Activated CD4-positive, alpha-beta memory T cell treated with anti-CD3 and anti-CD28 coated beads, Interleukin-2, amount 10 ng/mL, durations not matched to agents 7 days and 5 days (primary cell): ENCODE measurements at regions of chr19 and their contacts with region 1.

Region 1: GRCh38 chr19:49676690-49677231 is 310 bp upstream of the PRMT1 start:
- DNase-seq: peak; percentile 99
- H3K4me3 Mint-ChIP-seq: peak overlapping the region; percentile 90
- H3K27ac Mint-ChIP-seq: peak overlapping the region; percentile 89
- H3K4me1 Mint-ChIP-seq: peaks cover 43% of the 10 kb centered on the region
- H3K27me3 Mint-ChIP-seq: no peaks in the 10 kb centered on the region

Region 2: GRCh38 chr19:49502866-49503581 is 173.7 kb before region 1 on chr19:
- CTCF ChIA-PET with region 1: interaction called, 61 read pairs
- POLR2A ChIA-PET with region 1: interaction called, 10 read pairs
- DNase-seq: peak; percentile 63
- H3K4me3 Mint-ChIP-seq: no peak overlapping the region
- H3K27ac Mint-ChIP-seq: peak overlapping the region; percentile 81
- H3K4me1 Mint-ChIP-seq: peaks cover 51% of the 10 kb centered on the region
- H3K27me3 Mint-ChIP-seq: no peaks in the 10 kb centered on the region

Region 3: GRCh38 chr19:49580264-49581006 is 96.3 kb before region 1 on chr19 and contains the start of gene NOSIP:
- CTCF ChIA-PET with region 1: interaction called, 7 read pairs
- POLR2A ChIA-PET with region 1: interaction called, 15 read pairs
- DNase-seq: peak; percentile 98
- H3K4me3 Mint-ChIP-seq: peak within 1 kb of the TSS; percentile 89
- H3K27ac Mint-ChIP-seq: peak within 1 kb of the TSS; percentile 82
- H3K4me1 Mint-ChIP-seq: peaks cover 33% of the 10 kb centered on the region
- H3K27me3 Mint-ChIP-seq: no peaks in the 10 kb centered on the region
- total RNA-seq, gene NOSIP: 162 to 163 TPM

Region 4: GRCh38 chr19:49640113-49640898 is 36.5 kb before region 1 on chr19 and contains the start of gene RRAS:
- CTCF ChIA-PET with region 1: interaction called, 90 read pairs
- POLR2A ChIA-PET with region 1: interaction called, 49 read pairs
- DNase-seq: peak; percentile 100
- H3K4me3 Mint-ChIP-seq: peak within 1 kb of the TSS; percentile 98
- H3K27ac Mint-ChIP-seq: peak within 1 kb of the TSS; percentile 94
- H3K4me1 Mint-ChIP-seq: peaks cover 59% of the 10 kb centered on the region
- H3K27me3 Mint-ChIP-seq: peaks cover 6% of the 10 kb centered on the region
- total RNA-seq, gene RRAS: 17.8 to 18.1 TPM

Region 5: GRCh38 chr19:49779731-49780589 is 103.2 kb after region 1 on chr19:
- CTCF ChIA-PET with region 1: no interaction called
- POLR2A ChIA-PET with region 1: no interaction called
- DNase-seq: no peak
- H3K4me3 Mint-ChIP-seq: no peak overlapping the region
- H3K27ac Mint-ChIP-seq: no peak overlapping the region
- H3K4me1 Mint-ChIP-seq: peaks cover 25% of the 10 kb centered on the region
- H3K27me3 Mint-ChIP-seq: no peaks in the 10 kb centered on the region